Esophagus muscularis mucosa (tissue), 4 donors: ENCODE measurements at regions of chr16 and their contacts with region 1.

Region 1: DNA sequence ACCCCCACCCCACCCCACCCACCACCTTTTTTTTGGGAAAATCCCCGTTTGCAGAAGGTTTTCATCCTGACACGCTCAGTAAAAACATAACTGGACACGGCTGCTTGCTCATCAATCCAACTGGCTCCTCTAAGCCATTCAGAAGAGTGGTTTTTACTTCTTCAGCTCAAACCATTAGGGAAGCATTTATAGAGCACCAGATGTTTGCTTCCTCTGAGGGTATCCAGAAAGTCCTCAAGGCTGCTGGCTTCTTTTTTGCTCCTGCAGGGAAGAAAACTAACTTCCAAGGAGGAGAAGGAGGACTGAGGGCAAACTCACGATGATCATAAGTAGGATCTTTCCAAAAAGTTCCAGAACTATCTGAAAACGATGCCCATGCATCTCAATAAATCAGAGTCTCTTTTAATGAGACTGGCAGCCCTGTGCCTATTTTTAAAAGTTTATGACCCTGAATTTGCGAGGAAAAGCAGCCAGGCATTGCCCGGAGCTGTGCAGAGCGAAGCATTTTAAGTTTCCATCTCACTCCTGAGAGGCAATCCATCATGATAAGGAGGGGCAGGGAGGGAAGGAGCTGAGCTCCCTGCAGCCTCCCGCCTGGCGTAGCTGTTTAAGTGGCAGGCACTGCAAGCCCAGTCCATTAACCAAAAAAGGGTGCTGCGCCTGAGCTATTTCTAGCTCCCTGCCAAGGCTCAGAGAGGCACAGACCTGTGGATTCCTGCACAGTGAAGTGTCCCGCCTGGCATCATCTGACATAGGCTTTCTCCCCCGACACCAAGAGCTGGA is 146.3 kb upstream of the FOXF1 start:
- DNase-seq: no peak
- H3K4me3 ChIP-seq: no peak overlapping the region
- H3K27ac ChIP-seq: peak overlapping the region; percentile 79 to 85 (median 82)
- H3K4me1 ChIP-seq: peaks cover 0 to 58% (median 55%) of the 10 kb centered on the region in 4 donors
- H3K27me3 ChIP-seq: no peaks in the 10 kb centered on the region
- CTCF ChIP-seq: no peak
- EP300 ChIP-seq: peak; percentile 52
- POLR2A ChIP-seq: no peak

Region 2: DNA sequence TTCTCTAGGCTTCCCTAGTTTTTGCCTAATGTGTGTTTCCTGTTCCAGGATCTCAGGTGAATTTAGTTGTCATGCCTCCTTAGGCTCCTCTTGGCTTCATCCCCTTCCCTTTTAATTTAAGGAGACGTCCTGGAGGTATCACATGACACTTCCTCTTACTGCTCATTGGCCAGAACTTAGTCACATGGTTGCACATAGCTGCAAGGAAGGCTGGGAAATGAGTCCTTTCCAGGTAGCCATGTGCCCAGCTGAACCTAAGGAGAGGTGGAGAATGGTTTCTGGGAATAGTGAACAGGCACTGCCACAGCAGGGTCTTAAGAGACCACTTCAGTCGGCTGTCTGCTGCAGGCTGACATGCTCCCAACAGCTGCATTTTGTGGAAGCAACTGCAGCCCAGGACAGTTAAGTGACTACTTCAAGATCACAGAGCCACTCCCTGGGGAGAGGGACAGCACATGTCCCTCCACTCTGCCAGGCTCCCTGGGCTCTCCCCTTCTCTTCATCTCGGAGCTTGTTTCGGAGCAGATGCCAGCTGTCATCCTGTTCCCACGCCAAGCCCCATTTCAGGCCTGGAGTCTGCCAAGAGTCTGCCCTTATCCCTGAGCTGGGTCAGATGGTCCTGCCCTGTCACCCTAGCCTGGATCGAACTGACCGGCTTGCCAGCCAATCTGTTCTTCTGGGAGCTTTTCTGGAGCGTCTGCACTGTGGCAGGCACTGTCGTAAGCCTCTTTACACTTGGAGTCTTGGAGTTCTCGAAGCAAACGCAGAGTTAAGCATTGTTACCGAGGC is 64.9 kb after region 1 on chr16:
- intact Hi-C with region 1: loop called (anchors 2 kb)
- DNase-seq: no peak
- H3K4me3 ChIP-seq: no peak overlapping the region
- H3K27ac ChIP-seq: peak overlapping the region; percentile 85 to 89 (median 88)
- H3K4me1 ChIP-seq: peaks cover 2 to 81% (median 74%) of the 10 kb centered on the region in 4 donors
- H3K27me3 ChIP-seq: no peaks in the 10 kb centered on the region
- CTCF ChIP-seq: no peak
- EP300 ChIP-seq: no peak
- POLR2A ChIP-seq: no peak